ENCODE measurements at regions of chr1 and their contacts with region 1.

Region 1: GRCh38 chr1:180188091-180188506 is 33.4 kb downstream of the QSOX1 start:
- DNase-seq: peak; percentile 64 to 83
- H3K4me3 ChIP-seq: no peak overlapping the region
- H3K4me1 ChIP-seq: no peaks in the 10 kb centered on the region
- H3K27me3 ChIP-seq: no peaks in the 10 kb centered on the region

Region 2: DNA sequence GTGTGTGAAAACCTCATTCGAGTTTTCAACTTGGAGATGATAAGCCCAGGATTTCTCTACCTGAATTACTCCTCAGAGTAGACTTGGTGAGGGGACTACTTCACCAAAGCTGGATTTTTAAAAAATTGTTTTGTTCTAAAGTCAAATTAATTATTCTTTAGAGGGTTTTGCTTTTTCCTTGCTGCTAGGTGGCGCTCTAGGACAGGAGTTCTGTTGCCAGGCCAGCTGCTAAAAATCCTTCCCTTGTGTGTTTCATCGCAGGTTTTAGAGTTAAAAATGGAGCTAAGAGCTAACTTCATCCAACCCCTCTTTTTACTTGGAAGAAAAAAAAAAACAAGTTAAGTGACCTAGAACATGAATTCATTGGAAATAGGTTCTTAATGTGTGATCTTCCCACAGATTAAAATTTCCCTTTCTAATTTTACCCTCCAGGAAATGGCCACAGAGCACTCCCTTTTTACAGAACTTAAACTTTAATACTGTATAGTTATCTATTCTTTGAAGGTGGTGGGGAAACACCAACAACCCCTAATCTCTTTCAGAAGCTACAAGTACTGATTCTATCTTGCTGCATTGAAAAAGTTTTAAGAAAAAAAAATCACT is 481.7 kb before region 1 on chr1:
- in situ Hi-C with region 1: loop called (anchors 10 kb)
- DNase-seq: peak; percentile 40 to 76
- H3K4me3 ChIP-seq: no peak overlapping the region
- H3K4me1 ChIP-seq: no peaks in the 10 kb centered on the region
- H3K27me3 ChIP-seq: no peaks in the 10 kb centered on the region; the same call in 1 of the 2 replicates

Region 3: GRCh38 chr1:179728271-179728670 is 459.8 kb before region 1 on chr1:
- in situ Hi-C with region 1: no loop called
- DNase-seq: no peak
- H3K4me3 ChIP-seq: no peak overlapping the region
- H3K4me1 ChIP-seq: peaks cover 8% of the 10 kb centered on the region; the same call in 1 of the 2 replicates
- H3K27me3 ChIP-seq: no peaks in the 10 kb centered on the region

Region 4: DNA sequence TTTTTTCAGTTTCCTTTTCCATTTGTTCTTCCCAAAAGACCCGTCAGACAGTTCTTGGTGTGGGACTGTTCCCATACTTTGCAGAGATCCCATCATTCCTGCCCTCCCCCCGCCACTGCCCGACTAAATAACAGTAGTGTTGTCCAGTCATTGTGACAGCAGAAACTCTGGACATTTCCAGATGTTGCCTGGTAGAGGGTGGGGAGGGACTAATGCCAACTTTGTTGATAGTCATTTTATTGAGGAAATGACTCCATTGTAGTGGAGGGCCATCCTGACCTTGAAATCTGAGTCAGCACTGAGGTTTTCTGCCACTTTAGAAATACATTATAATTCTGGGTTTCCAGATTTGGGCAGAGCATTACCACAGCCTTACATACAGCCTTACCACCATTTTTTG is 148.1 kb before region 1 on chr1:
- in situ Hi-C with region 1: no loop called
- DNase-seq: no peak
- H3K4me3 ChIP-seq: no peak overlapping the region
- H3K4me1 ChIP-seq: peaks cover 11% of the 10 kb centered on the region
- H3K27me3 ChIP-seq: no peaks in the 10 kb centered on the region

Region 5: DNA sequence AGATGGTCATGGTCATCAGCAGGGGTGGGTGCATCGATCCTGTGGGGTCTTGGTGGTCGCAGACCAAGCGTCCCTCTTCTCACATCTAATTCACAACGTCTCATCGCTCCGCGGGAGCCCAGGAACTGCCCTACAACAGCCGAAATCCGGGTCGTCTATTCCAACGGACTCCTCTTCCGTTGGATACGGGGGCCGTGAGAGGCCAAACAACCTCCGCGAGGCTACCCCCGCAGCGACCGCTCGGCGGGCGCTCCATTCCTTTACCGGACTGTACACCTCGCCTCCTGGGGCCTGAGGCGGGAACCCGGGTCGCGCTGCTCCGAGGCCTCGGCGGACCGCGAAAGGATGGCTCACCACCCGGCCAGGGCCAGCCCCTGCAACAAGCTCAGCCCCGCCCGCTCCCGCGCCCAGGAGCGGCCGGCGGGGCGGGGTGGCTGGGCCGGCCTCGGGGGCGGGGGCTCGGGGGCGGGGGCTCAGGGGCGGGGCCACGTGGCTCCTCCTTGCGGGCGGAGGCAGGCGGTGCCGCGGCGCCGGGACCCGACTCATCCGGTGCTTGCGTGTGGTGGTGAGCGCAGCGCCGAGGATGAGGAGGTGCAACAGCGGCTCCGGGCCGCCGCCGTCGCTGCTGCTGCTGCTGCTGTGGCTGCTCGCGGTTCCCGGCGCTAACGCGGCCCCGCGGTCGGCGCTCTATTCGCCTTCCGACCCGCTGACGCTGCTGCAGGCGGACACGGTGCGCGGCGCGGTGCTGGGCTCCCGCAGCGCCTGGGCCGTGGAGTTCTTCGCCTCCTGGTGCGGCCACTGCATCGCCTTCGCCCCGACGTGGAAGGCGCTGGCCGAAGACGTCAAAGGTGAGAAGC is 33.5 kb before region 1 on chr1 and contains the start of gene QSOX1:
- in situ Hi-C with region 1: no loop called
- DNase-seq: peak; percentile 74 to 88
- H3K4me3 ChIP-seq: peak within 1 kb of the TSS; percentile 62
- H3K4me1 ChIP-seq: peaks cover 5% of the 10 kb centered on the region; the same call in 1 of the 2 replicates
- H3K27me3 ChIP-seq: no peaks in the 10 kb centered on the region

Region 6: GRCh38 chr1:180248731-180249681 is 60.9 kb after region 1 on chr1:
- in situ Hi-C with region 1: no loop called
- DNase-seq: peak in 1 of 2 experiments; percentile 63
- H3K4me3 ChIP-seq: no peak overlapping the region
- H3K4me1 ChIP-seq: no peaks in the 10 kb centered on the region
- H3K27me3 ChIP-seq: no peaks in the 10 kb centered on the region

Region 7: GRCh38 chr1:180415985-180416633 is 228.0 kb after region 1 on chr1:
- in situ Hi-C with region 1: loop called (anchors 10 kb)
- DNase-seq: peak in 1 of 2 experiments; percentile 55
- H3K4me3 ChIP-seq: no peak overlapping the region
- H3K4me1 ChIP-seq: no peaks in the 10 kb centered on the region
- H3K27me3 ChIP-seq: no peaks in the 10 kb centered on the region

Region 8: GRCh38 chr1:180482425-180483275 is 294.6 kb after region 1 on chr1:
- in situ Hi-C with region 1: loop called (anchors 10 kb)
- DNase-seq: peak; percentile 42 to 63
- H3K4me3 ChIP-seq: no peak overlapping the region
- H3K4me1 ChIP-seq: no peaks in the 10 kb centered on the region
- H3K27me3 ChIP-seq: no peaks in the 10 kb centered on the region

Measured in HAP-1 (cell line).